Aorta (tissue), 5 donors: ENCODE measurements at regions of chr19 and their contacts with region 1.

Region 1: GRCh38 chr19:33778089-33778791 is 18.4 kb upstream of the KCTD15 start:
- DNase-seq: peak; percentile 85 to 96
- ATAC-seq: peak; percentile 93
- H3K4me3 ChIP-seq: no peak overlapping the region
- H3K27ac ChIP-seq: no peak overlapping the region
- H3K4me1 ChIP-seq: no peaks in the 10 kb centered on the region
- H3K27me3 ChIP-seq: no peaks in the 10 kb centered on the region

Region 2: DNA sequence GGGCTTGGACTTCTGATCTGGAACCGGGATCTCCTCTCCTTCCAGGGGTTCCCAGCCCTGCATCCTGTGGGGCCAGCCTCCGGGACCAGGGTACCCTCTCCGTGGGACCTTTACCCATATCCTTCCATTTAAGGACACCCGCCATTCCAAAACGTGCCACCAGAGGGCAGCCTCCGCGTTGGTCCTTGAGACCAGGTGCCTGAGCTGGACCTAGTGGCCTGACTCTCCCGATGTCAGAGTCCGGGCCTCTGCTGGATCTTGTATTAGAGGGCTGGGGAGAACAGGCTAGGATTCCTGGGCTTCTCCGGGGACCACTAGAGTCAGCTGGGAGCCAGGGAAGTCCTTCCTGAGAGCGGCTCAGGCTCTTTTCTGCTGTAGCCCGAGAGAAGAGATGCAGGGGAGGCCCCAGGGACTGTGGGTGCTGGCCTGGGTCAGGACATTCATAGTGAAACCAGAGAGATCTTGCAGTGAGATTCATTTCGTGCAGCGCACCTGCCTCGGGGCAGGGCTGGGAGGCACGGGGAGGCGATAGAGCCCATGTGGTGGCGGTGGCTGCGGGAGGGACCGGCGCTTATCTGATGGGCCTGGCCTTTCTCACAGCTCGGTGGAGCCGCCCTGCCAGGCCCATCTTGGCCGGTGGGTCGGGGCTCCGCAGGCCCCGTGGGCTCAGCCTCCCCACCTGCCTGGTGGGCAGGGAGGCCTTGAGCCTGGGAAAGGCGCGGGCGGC is 542.8 kb before region 1 on chr19:
- intact Hi-C with region 1: loop called (anchors 10 kb)
- DNase-seq: peak; percentile 83 to 93
- ATAC-seq: peak; percentile 70
- H3K4me3 ChIP-seq: no peak overlapping the region
- H3K27ac ChIP-seq: no peak overlapping the region
- H3K4me1 ChIP-seq: no peaks in the 10 kb centered on the region
- H3K27me3 ChIP-seq: no peaks in the 10 kb centered on the region

Region 3: DNA sequence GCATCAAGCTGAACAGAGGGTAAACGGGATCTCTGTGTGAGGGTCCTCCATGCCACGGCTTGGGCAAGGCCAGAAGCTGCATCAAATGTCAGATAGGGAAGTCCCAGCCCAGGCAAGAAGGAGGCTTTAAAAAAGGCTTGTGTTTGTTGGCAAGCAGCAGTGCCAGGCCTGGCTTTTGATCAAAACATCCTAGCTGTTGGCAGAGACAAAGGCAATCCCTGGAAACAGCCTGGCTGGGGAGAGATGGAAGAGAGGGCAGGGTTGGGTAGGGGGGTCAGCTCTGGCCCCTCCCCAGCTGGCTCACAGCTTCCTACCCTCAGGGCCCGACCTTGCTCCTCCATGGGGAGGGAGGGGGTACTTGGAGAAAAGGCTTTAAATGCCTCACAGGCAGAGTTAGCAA is 43.3 kb before region 1 on chr19:
- intact Hi-C with region 1: no loop called
- DNase-seq: no peak
- ATAC-seq: no peak
- H3K4me3 ChIP-seq: no peak overlapping the region
- H3K27ac ChIP-seq: no peak overlapping the region
- H3K4me1 ChIP-seq: no peaks in the 10 kb centered on the region
- H3K27me3 ChIP-seq: no peaks in the 10 kb centered on the region

Region 4: GRCh38 chr19:33998739-33999345 is 220.6 kb after region 1 on chr19:
- intact Hi-C with region 1: loop called (anchors 2 to 5 kb)
- DNase-seq: no peak
- ATAC-seq: no peak
- H3K4me3 ChIP-seq: no peak overlapping the region
- H3K27ac ChIP-seq: no peak overlapping the region
- H3K4me1 ChIP-seq: no peaks in the 10 kb centered on the region
- H3K27me3 ChIP-seq: no peaks in the 10 kb centered on the region

Region 5: GRCh38 chr19:34096020-34096915 is 318.0 kb after region 1 on chr19:
- intact Hi-C with region 1: loop called (anchors 1 to 2 kb)
- DNase-seq: no peak
- ATAC-seq: no peak
- H3K4me3 ChIP-seq: no peak overlapping the region
- H3K27ac ChIP-seq: no peak overlapping the region
- H3K4me1 ChIP-seq: no peaks in the 10 kb centered on the region
- H3K27me3 ChIP-seq: no peaks in the 10 kb centered on the region

Region 6: DNA sequence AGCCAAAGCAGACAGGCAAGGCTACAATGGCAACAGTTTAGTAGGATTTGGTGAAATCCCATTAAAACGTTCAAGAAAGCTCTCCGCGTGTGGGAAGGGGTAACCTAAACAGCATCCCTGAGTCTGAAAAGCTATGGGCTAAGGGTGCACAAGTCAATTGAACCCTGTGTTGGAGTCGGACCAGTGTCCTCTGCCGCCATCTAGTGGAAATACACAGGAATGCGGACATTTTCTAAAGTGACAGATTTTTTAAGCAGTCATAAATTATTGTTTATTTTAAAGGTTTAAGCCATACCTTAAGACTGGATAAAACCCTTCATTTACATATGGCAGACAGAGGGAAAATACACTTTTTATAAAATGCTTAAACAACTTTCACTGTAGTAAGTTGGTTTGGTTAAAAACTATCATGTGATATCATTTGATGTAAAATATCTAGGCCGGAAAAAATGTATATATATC is 367.5 kb after region 1 on chr19:
- intact Hi-C with region 1: loop called (anchors 2 to 5 kb)
- DNase-seq: no peak
- ATAC-seq: peak; percentile 66
- H3K4me3 ChIP-seq: no peak overlapping the region
- H3K27ac ChIP-seq: no peak overlapping the region
- H3K4me1 ChIP-seq: no peaks in the 10 kb centered on the region
- H3K27me3 ChIP-seq: no peaks in the 10 kb centered on the region